ENCODE measurements at regions of chr5 and their contacts with region 1.

Region 1: DNA sequence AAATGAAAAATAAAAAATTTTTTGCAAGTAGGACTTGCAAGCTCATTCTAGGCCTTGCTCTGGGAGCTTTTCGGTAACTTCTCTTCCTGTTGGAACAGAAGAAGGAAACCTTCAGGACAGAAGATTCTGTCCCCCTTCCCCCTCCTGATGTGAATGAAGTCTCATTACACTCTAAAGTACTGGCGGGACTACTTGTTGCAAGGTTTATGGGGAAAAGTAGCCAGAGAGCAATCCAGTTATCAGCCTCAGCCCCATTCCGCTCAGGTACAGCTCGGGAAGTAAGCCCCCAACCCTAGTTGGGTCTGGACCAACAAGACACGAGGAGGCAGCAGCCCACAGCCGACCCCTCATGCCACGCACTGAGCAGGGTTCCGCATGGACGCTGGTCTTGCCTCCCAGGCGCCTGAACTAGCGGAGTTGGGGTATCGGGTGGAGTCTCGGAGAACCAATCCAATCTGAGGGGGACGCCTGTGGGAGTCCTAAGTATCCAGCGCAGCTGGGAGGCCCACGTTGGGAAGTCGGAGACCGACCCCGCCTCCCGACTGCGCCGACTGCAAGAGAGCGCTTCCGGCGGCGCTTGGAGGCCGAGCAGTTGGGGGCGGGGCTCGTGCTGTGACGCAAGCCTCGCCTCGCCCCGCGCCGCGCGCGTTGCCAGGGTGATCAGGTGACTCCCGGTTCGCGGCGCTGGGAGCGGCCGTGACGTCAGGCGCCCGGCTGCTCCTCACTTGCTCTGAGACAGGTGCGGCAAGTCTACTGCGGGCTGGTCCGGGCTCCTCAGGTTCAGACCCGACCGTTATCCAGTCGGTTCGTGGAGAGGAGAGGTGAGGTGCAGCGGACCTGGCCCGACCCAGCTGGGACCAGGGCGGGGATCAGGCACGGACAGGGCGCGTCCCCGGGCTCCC is at the start of gene CYSTM1:
- DNase-seq: peak; percentile 96
- H3K4me3 ChIP-seq: peak within 1 kb of the TSS; percentile 58 to 94 (median 67)
- H3K27ac ChIP-seq: peak within 1 kb of the TSS; percentile 72
- H3K4me1 ChIP-seq: peaks cover 4% of the 10 kb centered on the region
- H3K27me3 ChIP-seq: no peaks in the 10 kb centered on the region
- CTCF ChIP-seq: no peak
- total RNA-seq, gene CYSTM1: 27.5 to 31.7 TPM

Region 2: DNA sequence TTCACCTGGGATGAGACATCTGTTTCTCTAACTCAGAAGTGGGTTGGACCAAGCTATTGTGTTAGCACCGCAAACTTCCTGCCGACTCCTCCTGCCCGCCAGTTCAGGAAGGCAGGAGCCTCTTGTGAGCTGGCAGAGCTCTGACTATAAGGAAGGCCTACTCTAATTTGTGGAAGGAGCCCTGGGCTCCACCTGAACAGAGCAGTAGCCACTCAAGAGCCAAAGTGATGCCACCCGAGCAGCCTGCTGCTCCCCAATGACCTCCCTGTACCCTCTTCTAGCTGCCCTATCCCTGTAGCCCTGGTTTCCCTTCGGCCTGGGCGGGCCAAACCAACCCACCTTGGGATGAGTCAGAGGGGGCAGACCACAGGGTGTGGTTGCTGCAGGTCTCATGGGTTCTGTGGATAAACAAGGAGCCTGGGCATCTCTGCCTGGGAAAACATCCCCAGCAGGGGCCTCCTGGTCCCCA is 297.6 kb before region 1 on chr5:
- CTCF ChIA-PET with region 1: no interaction called
- dilution Hi-C with region 1: no loop called
- in situ Hi-C with region 1: no loop called
- intact Hi-C with region 1: no loop called
- DNase-seq: peak; percentile 85
- H3K4me3 ChIP-seq: no peak overlapping the region
- H3K27ac ChIP-seq: peak overlapping the region; percentile 72
- H3K4me1 ChIP-seq: peaks cover 15% of the 10 kb centered on the region
- H3K27me3 ChIP-seq: no peaks in the 10 kb centered on the region
- CTCF ChIP-seq: no peak

Region 3: DNA sequence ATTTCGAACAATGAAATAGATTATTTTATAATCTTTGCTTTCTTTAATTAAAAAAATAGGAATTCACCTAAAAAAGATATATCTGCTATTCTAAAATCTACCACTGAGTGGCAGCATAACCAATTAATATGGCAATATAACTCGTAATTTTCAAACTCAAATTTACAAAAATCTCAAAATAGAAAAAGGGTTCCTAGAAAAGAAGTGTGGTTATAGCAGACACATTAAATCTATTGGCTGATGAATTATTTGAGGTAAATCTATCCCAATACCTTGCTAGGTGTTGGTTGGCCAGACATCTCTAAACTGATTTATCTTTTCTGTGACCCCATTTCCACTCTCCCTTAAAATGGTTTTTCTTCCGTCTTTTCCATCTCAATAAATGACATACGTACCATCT is 101.4 kb before region 1 on chr5:
- CTCF ChIA-PET with region 1: no interaction called
- dilution Hi-C with region 1: no loop called
- in situ Hi-C with region 1: no loop called
- intact Hi-C with region 1: no loop called
- DNase-seq: no peak
- H3K4me3 ChIP-seq: no peak overlapping the region
- H3K27ac ChIP-seq: no peak overlapping the region
- H3K4me1 ChIP-seq: no peaks in the 10 kb centered on the region
- H3K27me3 ChIP-seq: peaks cover 2% of the 10 kb centered on the region
- CTCF ChIP-seq: peak; percentile 50 to 53

Region 4: DNA sequence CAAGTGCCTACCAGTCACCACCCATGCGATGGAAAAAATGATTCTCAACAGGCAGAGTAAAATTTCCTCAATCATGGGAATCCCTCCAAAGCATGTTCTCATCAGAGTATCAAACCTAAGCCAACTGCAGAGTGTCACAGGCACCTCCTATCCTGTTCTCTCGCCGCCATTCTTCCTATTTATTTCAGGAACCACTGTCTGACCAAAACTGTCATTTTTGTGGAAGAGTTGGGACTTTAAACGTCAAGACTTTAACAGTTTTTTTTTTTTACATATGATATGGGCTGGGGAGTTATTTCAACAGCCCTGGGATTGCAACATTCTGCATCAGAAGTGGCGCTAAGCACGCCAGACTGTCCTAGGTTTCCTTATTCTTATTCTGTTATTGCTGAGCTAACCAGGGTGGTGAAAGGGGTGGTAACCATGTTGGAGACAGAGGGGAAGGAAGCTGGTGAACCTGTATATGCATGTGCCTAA is 98.7 kb after region 1 on chr5:
- CTCF ChIA-PET with region 1: no interaction called
- dilution Hi-C with region 1: no loop called
- in situ Hi-C with region 1: no loop called
- intact Hi-C with region 1: no loop called
- DNase-seq: no peak
- H3K4me3 ChIP-seq: no peak overlapping the region
- H3K27ac ChIP-seq: no peak overlapping the region
- H3K4me1 ChIP-seq: no peaks in the 10 kb centered on the region
- H3K27me3 ChIP-seq: no peaks in the 10 kb centered on the region
- CTCF ChIP-seq: no peak

Region 5: DNA sequence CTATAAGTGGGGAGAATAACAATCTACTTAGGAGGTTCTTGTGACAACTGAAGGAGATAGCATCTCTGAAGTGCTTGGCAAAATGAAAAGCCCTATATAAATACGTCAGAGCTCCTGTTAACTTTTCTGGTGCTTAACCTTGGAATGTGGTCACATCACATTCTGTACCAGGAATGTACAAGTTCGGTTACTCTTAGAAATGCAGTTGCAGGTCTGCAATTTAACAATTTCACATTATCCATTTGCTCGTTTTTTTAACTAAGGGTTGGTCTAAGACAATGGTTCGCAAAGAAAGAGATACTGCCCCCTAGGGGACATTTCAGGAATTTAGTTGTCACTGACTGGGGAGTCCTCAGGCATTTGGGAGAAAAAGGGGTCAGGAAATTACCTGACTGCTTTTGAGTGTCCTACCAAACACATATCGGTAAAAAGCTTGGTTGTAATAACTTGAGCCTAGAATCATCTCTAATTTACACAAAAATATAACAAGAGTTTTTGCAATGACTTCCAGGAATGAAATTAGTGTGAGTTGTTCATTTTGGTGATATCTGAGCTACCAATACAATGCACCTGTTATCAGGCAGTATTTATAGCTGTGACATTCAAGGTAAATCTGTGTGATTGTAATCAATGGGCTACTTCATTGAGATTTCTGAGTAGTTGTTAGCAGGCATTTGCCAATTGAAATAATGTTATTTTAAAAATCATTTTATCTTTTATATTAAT is 177.1 kb after region 1 on chr5:
- CTCF ChIA-PET with region 1: interaction called, 7 read pairs
- dilution Hi-C with region 1: no loop called
- in situ Hi-C with region 1: loop called (anchors 5 to 10 kb)
- intact Hi-C with region 1: loop called (anchors 2 kb)
- DNase-seq: peak; percentile 65
- H3K4me3 ChIP-seq: no peak overlapping the region
- H3K27ac ChIP-seq: no peak overlapping the region
- H3K4me1 ChIP-seq: peaks cover 30% of the 10 kb centered on the region
- H3K27me3 ChIP-seq: no peaks in the 10 kb centered on the region
- CTCF ChIP-seq: peak; percentile 82 to 88

Region 6: DNA sequence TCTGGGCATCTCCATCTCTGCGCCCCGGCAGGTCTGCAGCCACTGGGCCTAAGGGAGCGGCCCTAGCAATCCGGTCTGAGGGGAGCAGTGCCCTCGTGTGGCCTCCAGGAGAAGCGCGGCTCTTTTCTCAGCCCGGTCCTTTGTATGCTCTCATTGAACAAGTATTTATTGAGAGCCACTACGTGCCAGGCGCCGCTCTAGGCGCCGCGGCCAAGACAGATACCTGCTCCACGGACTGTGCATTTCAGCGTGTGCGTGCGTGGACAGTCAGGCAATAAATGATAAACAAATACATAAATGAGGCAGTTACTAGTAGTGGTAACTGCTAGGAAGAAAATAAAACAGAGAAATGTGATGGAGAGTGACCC is 183.0 kb after region 1 on chr5:
- CTCF ChIA-PET with region 1: interaction called, 6 read pairs
- dilution Hi-C with region 1: no loop called
- in situ Hi-C with region 1: loop called (anchors 5 to 10 kb)
- intact Hi-C with region 1: loop called (anchors 5 kb)
- DNase-seq: peak; percentile 77
- H3K4me3 ChIP-seq: no peak overlapping the region
- H3K27ac ChIP-seq: peak overlapping the region; percentile 4
- H3K4me1 ChIP-seq: peaks cover 4% of the 10 kb centered on the region
- H3K27me3 ChIP-seq: no peaks in the 10 kb centered on the region
- CTCF ChIP-seq: peak; percentile 81 to 93